Activated CD8-positive, alpha-beta T cell treated with anti-CD3 and anti-CD28 coated beads for 36 hours (primary cell): ENCODE measurements at regions of chr2 and their contacts with region 1.

Region 1: GRCh38 chr2:10832203-10832936 is 19.8 kb upstream of the PDIA6 start:
- DNase-seq: peak; percentile 89
- ATAC-seq: peak; percentile 92
- H3K4me3 Mint-ChIP-seq: no peak overlapping the region
- H3K27ac Mint-ChIP-seq: no peak overlapping the region
- H3K4me1 Mint-ChIP-seq: peaks cover 3% of the 10 kb centered on the region
- H3K27me3 Mint-ChIP-seq: peaks cover 20% of the 10 kb centered on the region
- CTCF ChIP-seq: peak; percentile 97

Region 2: DNA sequence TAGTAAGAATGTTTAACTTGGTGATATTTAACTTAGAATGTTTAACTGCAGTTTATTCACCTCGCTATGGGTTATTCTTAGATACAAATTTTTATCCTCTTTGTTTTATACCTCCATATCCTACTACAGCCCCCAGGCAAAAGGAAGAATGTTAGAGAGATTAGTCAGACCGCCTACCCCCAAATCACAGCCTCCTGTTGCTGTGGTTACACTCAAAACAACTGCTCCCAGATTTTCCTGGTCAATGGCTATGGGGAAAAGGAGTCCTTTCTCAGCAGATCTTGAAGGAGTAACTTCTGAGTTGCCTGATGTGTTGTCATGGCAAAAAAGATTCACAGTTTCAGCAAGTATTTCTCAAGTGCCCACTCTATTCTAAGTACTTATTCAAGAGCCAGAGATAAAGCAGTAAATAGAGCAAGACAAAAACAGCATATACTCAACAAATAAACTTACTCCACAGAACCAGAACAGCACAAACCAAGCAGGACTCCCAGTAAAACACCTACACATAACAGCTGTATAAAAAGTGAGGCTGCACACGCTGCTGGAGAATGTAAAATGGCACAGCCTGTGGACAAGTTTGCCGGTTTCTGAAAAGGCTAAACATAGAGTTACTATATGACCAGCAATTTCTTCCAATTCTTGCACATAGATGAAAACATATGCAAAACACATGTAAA is 247.4 kb before region 1 on chr2:
- CTCF ChIA-PET with region 1: no interaction called
- POLR2A ChIA-PET with region 1: no interaction called
- intact Hi-C with region 1: no loop called
- DNase-seq: no peak
- ATAC-seq: no peak
- H3K4me3 Mint-ChIP-seq: no peak overlapping the region
- H3K27ac Mint-ChIP-seq: no peak overlapping the region
- H3K4me1 Mint-ChIP-seq: peaks cover 8% of the 10 kb centered on the region
- H3K27me3 Mint-ChIP-seq: no peaks in the 10 kb centered on the region
- CTCF ChIP-seq: no peak

Region 3: GRCh38 chr2:10817413-10817812 is 15.0 kb before region 1 on chr2:
- CTCF ChIA-PET with region 1: interaction called, 50 read pairs
- POLR2A ChIA-PET with region 1: interaction called, 3 read pairs
- intact Hi-C with region 1: no loop called
- DNase-seq: peak; percentile 36
- ATAC-seq: no peak
- H3K4me3 Mint-ChIP-seq: no peak overlapping the region
- H3K27ac Mint-ChIP-seq: no peak overlapping the region
- H3K4me1 Mint-ChIP-seq: peaks cover 3% of the 10 kb centered on the region
- H3K27me3 Mint-ChIP-seq: peaks cover 4% of the 10 kb centered on the region
- CTCF ChIP-seq: peak; percentile 37

Region 4: GRCh38 chr2:10860813-10861360 is 28.5 kb after region 1 on chr2:
- CTCF ChIA-PET with region 1: interaction called, 10 read pairs
- POLR2A ChIA-PET with region 1: no interaction called
- intact Hi-C with region 1: no loop called
- DNase-seq: no peak
- ATAC-seq: no peak
- H3K4me3 Mint-ChIP-seq: no peak overlapping the region
- H3K27ac Mint-ChIP-seq: no peak overlapping the region
- H3K4me1 Mint-ChIP-seq: peaks cover 18% of the 10 kb centered on the region
- H3K27me3 Mint-ChIP-seq: peaks cover 21% of the 10 kb centered on the region
- CTCF ChIP-seq: no peak

Region 5: GRCh38 chr2:10909050-10909995 is 77.0 kb after region 1 on chr2:
- CTCF ChIA-PET with region 1: interaction called, 15 read pairs
- POLR2A ChIA-PET with region 1: no interaction called
- intact Hi-C with region 1: no loop called
- DNase-seq: peak; percentile 39
- ATAC-seq: peak; percentile 55
- H3K4me3 Mint-ChIP-seq: no peak overlapping the region
- H3K27ac Mint-ChIP-seq: no peak overlapping the region
- H3K4me1 Mint-ChIP-seq: no peaks in the 10 kb centered on the region
- H3K27me3 Mint-ChIP-seq: peaks cover 24% of the 10 kb centered on the region
- CTCF ChIP-seq: peak; percentile 56

Region 6: DNA sequence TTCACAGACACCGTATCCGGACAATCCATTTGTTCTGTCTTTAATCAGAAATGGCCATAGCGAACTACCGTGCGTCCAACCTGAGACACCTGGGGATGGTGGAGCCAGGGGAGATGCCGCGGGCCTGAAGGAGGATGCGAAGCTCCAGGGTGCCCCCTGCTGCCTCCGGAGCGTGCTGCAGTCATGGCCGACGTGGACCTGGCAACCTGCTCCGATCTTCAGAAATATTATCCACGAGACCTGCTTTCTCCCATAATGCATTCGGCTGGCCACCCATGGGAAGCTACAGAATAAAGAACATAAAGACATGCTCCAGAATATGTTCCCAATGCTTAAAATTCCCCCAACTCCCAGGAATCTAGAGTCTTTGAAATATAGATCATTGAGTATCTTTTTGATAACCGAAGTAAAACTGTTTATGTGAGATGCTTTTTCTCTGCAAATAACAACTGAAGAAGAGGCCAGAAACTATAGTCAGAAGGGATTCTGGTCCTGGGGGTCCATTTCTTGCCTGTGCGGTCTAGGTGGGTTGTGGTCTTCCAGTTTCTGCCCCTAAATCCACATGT is 292.2 kb after region 1 on chr2:
- CTCF ChIA-PET with region 1: interaction called, 248 read pairs
- POLR2A ChIA-PET with region 1: no interaction called
- intact Hi-C with region 1: loop called (anchors 2 kb)
- DNase-seq: peak; percentile 83
- ATAC-seq: peak; percentile 89
- H3K4me3 Mint-ChIP-seq: no peak overlapping the region
- H3K27ac Mint-ChIP-seq: no peak overlapping the region
- H3K4me1 Mint-ChIP-seq: peaks cover 2% of the 10 kb centered on the region
- H3K27me3 Mint-ChIP-seq: no peaks in the 10 kb centered on the region
- CTCF ChIP-seq: peak; percentile 88